ENCODE measurements at regions of chr4 and their contacts with region 1.

Region 1: GRCh38 chr4:148364525-148364924 is 77.7 kb downstream of the NR3C2 start:
- DNase-seq: no peak
- H3K4me3 ChIP-seq: no peak overlapping the region
- H3K27ac ChIP-seq: no peak overlapping the region
- H3K4me1 ChIP-seq: no peaks in the 10 kb centered on the region
- H3K27me3 ChIP-seq: no peaks in the 10 kb centered on the region
- CTCF ChIP-seq: no peak

Region 2: DNA sequence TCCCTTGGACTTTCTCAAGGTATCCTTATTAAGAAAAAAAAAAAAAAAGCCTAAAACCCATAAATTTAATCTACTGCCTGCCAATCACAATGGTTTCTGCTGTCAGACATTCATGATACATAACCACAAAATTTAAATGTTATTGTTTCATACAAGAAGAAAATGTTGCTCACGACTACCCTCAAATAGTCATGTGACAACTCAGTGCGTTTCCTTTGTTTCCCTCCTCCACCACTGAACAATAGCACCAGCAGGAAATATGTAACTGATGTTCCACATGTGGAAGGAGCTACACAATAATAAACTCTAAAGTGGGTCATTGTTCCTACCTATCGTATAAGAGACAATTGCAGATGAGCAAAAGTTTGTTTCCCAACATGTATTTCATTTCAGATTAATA is 1127.7 kb before region 1 on chr4:
- CTCF ChIA-PET with region 1: no interaction called
- POLR2A ChIA-PET with region 1: interaction called, 21 read pairs
- intact Hi-C with region 1: no loop called
- DNase-seq: no peak
- H3K4me3 ChIP-seq: no peak overlapping the region
- H3K27ac ChIP-seq: no peak overlapping the region
- H3K4me1 ChIP-seq: no peaks in the 10 kb centered on the region
- H3K27me3 ChIP-seq: no peaks in the 10 kb centered on the region
- CTCF ChIP-seq: no peak

Region 3: DNA sequence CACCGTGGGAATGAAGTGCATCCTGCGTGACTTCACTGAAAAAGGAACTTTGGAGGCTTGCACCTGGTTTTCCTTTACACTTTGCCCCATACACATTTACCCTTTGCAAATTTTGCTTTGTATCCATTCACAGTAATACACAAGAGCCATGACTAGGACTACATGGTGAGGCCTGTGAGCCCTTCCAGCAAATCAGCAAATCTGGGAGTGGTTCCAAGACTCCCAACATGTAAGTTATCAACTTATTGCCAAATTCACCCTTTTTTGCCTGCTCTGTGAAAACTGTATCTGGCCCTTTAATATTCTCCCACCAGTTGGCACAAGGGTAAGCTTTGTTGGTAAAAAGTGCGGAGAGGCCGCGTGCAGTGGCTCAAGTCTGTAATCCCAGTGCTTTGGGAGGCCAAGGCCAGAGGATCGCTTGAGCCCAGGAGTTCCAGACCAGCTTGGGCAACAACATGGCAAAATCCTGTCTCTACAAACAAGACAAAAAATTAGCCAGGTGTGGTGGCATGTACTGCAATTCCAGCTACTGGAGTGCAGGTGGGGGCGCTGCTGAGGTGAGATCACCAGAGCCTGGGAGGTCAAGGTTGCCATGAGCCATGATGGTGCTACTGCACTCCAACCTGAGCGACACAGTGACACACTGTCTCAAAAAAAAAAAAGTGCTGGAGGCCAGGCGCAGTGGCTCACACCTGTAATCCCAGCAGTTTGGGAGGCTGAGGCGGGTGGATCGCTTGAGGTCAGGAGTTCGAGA is 685.6 kb before region 1 on chr4:
- CTCF ChIA-PET with region 1: no interaction called
- POLR2A ChIA-PET with region 1: no interaction called
- intact Hi-C with region 1: no loop called
- DNase-seq: no peak
- H3K4me3 ChIP-seq: no peak overlapping the region
- H3K27ac ChIP-seq: no peak overlapping the region
- H3K4me1 ChIP-seq: peaks cover 8% of the 10 kb centered on the region; the same call in 1 of the 2 replicates
- H3K27me3 ChIP-seq: no peaks in the 10 kb centered on the region
- CTCF ChIP-seq: no peak; the same call in 1 of the 2 replicates

Region 4: DNA sequence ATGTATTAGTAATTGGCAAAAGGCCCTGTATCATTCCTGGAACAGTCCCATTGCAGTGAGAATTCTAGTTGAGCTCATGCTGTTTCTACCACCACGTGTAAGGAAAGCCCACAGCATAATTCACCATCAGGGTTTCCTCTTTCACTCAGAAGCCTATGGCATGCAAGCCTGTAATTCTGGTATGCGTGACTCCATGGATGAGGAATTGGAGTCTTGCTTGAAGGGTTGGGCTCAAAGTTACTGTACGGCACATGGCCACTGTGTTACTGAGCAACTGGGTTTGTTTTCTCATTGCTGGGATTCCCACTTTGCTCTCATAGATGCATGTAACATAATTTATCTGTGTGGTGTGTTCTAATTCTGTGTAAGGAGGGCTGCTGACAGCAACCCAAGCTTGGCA is 210.0 kb after region 1 on chr4:
- CTCF ChIA-PET with region 1: no interaction called
- POLR2A ChIA-PET with region 1: no interaction called
- intact Hi-C with region 1: no loop called
- DNase-seq: no peak
- H3K4me3 ChIP-seq: no peak overlapping the region
- H3K27ac ChIP-seq: no peak overlapping the region
- H3K4me1 ChIP-seq: no peaks in the 10 kb centered on the region
- H3K27me3 ChIP-seq: no peaks in the 10 kb centered on the region
- CTCF ChIP-seq: no peak

Measured in PC-9 (cell line).